Mammary epithelial cell (primary cell): ENCODE measurements at regions of chr17 and their contacts with region 1.

Region 1: GRCh38 chr17:7280519-7281429 is 744 bp upstream of the SLC2A4 start:
- DNase-seq: peak; percentile 78
- H3K4me3 ChIP-seq: peak overlapping the region; percentile 47 to 49 (median 48)
- H3K27ac ChIP-seq: peak overlapping the region; percentile 24
- H3K4me1 ChIP-seq: peaks cover 22% of the 10 kb centered on the region
- H3K27me3 ChIP-seq: no peaks in the 10 kb centered on the region
- CTCF ChIP-seq: peak; percentile 95 to 97

Region 2: DNA sequence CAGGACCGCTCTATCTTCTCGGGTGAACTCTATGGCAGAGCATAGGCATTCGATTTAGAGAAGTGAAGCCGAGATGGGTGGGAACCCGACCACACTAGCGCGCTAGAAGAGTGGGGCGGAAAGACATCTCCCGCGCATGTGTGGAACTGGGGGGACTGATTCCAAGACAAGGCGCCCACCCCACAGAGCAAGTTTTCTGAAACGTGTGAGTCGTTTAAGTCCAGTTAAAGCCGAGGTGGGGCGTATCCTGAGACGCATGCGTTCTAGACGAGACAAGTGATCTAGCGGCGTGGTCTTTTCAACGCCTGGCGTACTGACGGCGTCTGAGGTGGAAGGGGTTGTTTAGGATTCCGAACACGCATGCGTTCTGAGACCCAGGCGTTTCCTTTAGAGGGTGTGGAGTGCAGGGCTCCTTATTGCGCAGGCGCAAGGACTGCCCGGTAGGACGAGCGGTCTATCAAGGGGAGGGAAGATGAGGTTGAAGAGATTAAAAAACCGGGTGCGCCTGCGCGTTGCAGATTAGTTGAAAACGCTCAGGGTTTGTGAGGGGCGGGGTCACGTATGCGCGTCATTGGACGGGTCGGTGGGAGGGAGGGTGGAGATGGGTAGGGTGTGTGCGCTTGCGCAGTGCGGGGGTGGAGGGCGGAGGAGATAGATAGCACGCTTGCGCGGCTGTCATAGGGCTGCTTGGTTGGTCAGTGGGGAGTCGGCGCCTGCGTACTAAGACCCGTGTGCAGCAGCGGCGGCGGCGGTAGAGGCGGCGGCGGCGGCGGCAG is 26.3 kb after region 1 on chr17 and contains the start of gene EIF5A:
- CTCF ChIA-PET with region 1: no interaction called
- dilution Hi-C with region 1: no loop called
- in situ Hi-C with region 1: no loop called
- intact Hi-C with region 1: loop called (anchors 2 kb)
- DNase-seq: peak; percentile 100
- H3K4me3 ChIP-seq: peak within 1 kb of the TSS; percentile 79 to 91 (median 80)
- H3K27ac ChIP-seq: peak within 1 kb of the TSS; percentile 91
- H3K4me1 ChIP-seq: peaks cover 24% of the 10 kb centered on the region
- H3K27me3 ChIP-seq: no peaks in the 10 kb centered on the region
- CTCF ChIP-seq: no peak
- total RNA-seq, gene EIF5A: 597 to 1,021 TPM

Region 3: DNA sequence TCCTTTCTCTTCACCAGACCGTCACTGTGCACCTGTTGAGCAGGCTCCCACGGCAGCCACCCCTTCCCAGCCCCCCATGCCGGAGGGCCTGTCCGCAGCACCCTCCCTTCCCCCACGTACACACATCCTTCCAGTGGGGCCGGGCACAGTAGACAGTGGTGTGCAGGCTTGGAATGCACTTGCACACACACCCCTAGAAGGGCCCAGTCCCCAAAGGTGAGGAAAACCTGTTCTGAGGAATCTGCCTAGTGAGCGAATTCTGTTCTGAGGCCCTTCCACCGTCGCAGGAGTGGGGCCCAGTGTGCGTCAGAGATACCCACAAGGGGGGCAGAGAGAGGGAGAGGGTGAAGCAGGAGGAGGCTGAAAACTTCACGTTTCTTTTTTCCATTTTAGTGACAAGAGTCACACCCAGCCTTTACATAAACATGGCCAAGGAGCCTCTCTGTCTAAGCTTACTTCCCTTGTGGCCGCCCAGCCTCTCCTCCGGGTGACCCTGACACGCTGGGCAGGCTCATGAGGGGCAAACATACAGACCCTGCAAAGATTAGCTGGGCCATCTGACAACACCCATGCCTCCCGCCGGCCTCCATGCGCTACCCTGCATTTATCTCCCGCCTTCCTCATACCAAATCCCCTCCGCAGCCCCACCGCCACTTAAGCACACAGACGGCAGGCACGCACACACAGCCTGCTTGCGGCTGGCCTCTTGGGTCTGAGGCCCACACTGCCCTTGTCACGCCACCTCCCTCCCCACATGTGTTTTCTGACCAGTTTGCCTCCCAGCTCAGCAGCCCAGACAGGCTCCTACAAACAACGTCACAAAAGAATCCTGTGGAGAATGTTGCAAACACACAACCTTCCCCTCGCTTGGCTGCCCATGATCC is 196.9 kb after region 1 on chr17:
- CTCF ChIA-PET with region 1: no interaction called
- dilution Hi-C with region 1: no loop called
- in situ Hi-C with region 1: no loop called
- intact Hi-C with region 1: loop called (anchors 1 kb)
- DNase-seq: no peak
- H3K4me3 ChIP-seq: peak overlapping the region; percentile 50 to 76 (median 53)
- H3K27ac ChIP-seq: peak overlapping the region; percentile 67
- H3K4me1 ChIP-seq: peaks cover 45% of the 10 kb centered on the region
- H3K27me3 ChIP-seq: no peaks in the 10 kb centered on the region
- CTCF ChIP-seq: no peak